ENCODE measurements at regions of chr16 and their contacts with region 1.

Region 1: DNA sequence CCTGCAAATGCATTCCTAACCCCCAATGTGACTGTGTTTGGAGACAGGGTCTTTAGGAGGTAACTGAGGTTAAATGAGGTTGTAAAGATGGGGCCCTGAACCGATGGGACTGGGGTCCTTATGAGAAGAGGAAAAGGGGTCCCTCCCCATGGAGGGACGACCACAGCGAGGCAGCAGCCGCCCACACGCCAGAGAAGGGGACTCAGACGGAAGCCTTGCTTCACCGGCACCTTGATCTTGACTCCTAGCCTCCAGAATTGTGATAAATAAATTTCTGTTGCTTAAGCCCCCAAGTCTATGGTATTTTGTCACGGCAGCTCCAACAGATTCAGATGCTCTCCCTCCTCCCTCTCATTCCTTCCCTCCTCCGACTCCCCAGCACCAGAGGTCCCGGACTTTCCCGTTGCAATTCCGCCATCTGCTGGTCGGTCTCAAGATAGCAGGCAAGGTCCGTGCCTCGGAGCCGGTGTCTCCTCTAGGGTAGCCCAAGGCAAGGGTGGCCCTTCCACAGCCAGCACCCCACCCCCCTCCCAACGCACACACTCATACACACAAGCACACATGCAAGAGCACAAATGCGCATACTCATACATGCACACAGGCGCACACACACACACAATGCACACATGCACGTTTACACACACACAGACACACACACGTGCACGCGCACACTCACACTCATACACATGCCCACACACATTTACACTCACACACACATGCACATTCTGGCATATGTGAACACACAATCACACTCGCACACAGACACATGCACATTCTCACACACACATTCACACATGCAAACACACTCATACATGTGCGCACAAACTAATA is 23.1 kb upstream of the C16orf78 start:
- DNase-seq: peak; percentile 34
- ATAC-seq: peak; percentile 96
- H3K4me3 ChIP-seq: no peak overlapping the region
- H3K27ac ChIP-seq: no peak overlapping the region
- H3K4me1 ChIP-seq: no peaks in the 10 kb centered on the region
- H3K27me3 ChIP-seq: no peaks in the 10 kb centered on the region
- CTCF ChIP-seq: peak; percentile 84
- POLR2A ChIP-seq: no peak
- RAD21 ChIP-seq: peak; percentile 87

Region 2: DNA sequence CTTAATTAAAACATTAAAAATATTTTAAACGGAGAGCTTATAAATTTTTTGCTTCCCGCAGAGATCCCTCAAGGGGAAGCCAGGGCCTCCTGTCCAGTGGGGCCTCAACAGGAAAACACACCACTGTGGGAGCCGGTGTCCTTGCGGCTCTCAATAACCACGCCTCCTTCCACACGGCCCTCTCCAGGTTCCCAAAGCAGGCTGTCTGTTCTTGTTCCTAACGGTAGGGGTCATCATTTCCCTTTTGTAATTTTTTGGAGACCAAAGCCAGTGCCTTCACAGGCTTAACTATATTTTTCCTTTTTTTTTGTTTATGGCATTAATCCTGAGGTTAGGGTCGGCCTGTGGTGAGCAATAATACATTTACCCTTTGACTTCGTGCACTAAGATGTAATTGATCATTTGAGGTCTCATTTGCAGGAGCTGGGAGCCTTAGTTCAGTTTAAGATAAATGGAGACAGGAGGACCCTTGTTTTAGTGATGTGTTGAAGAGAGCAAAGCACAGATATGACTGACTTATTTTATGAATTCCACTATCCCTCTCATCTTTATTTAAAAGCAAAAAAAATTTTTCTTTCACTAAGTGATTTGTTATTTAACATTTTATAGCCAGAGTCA is 663.0 kb before region 1 on chr16:
- CTCF ChIA-PET with region 1: interaction called, 4 read pairs
- POLR2A ChIA-PET with region 1: no interaction called
- dilution Hi-C with region 1: no loop called
- in situ Hi-C with region 1: no loop called
- intact Hi-C with region 1: loop called (anchors 1 kb)
- DNase-seq: peak; percentile 67
- ATAC-seq: peak; percentile 100
- H3K4me3 ChIP-seq: no peak overlapping the region
- H3K27ac ChIP-seq: no peak overlapping the region
- H3K4me1 ChIP-seq: no peaks in the 10 kb centered on the region
- H3K27me3 ChIP-seq: no peaks in the 10 kb centered on the region; the same call in 1 of the 2 replicates
- CTCF ChIP-seq: peak; percentile 84
- POLR2A ChIP-seq: no peak
- RAD21 ChIP-seq: peak; percentile 81

Region 3: DNA sequence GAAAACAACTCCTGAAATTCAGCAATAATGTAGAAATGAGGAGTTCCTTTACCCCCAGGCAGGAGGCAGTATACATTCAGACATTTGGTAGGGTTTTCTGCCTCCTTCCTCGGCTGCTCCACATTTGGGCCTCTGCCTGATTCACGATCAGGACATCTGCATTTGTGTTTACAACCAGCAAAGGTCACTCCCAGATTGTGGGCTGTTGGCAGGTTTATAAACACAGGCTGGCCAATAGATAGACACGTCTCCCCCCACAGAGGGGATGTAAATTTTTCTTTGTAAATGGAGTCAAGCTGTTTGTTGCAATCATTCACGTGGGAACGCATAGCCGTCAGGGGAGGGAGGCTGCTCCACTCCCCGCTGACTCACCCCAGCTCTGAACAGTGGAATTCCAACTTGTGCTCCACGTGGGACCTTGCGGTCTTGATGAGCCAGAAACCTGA is 488.4 kb before region 1 on chr16:
- CTCF ChIA-PET with region 1: interaction called, 11 read pairs
- POLR2A ChIA-PET with region 1: no interaction called
- dilution Hi-C with region 1: no loop called
- in situ Hi-C with region 1: no loop called
- intact Hi-C with region 1: loop called (anchors 1 kb)
- DNase-seq: peak; percentile 80
- ATAC-seq: peak; percentile 94
- H3K4me3 ChIP-seq: no peak overlapping the region
- H3K27ac ChIP-seq: no peak overlapping the region
- H3K4me1 ChIP-seq: no peaks in the 10 kb centered on the region
- H3K27me3 ChIP-seq: no peaks in the 10 kb centered on the region
- CTCF ChIP-seq: peak; percentile 49
- POLR2A ChIP-seq: no peak
- RAD21 ChIP-seq: peak; percentile 54

Region 4: DNA sequence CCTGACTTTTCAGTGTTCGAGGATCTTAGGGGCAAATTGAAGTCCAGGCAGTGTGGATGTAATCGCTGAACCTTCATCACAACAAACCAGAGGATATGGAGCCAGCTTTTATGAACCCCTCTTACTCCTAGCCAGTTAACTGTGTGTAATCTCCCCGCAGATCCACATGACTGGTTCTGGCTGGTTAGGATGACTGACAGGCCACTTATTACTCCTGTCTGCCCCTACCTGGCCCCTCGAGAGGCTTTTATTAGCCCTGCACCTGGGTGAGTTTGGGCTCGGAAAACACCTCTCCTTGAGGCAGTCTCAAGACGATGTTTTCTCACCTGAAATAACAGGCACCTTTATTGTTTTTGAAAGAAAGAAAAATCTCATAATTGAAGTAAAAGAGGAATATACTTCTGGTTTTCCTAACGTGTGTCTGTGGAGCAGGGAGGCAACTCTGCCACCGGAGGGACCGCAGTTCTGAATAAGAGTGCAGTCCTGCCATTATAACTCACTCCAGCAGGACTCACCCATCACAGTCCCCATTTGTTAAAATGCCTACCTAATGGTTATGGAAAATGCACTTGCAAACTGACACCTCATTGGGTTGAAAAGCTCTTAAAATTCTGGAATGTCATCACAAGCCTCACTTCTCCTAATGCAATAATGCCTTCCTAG is 448.6 kb before region 1 on chr16:
- CTCF ChIA-PET with region 1: no interaction called
- POLR2A ChIA-PET with region 1: no interaction called
- dilution Hi-C with region 1: no loop called
- in situ Hi-C with region 1: no loop called
- intact Hi-C with region 1: loop called (anchors 2 kb)
- DNase-seq: no peak
- ATAC-seq: peak; percentile 49
- H3K4me3 ChIP-seq: no peak overlapping the region
- H3K27ac ChIP-seq: no peak overlapping the region
- H3K4me1 ChIP-seq: no peaks in the 10 kb centered on the region
- H3K27me3 ChIP-seq: peaks cover 9% of the 10 kb centered on the region
- CTCF ChIP-seq: peak; percentile 32; the same call in 1 of the 2 replicates
- POLR2A ChIP-seq: no peak
- RAD21 ChIP-seq: peak; percentile 36; the same call in 1 of the 2 replicates

Region 5: DNA sequence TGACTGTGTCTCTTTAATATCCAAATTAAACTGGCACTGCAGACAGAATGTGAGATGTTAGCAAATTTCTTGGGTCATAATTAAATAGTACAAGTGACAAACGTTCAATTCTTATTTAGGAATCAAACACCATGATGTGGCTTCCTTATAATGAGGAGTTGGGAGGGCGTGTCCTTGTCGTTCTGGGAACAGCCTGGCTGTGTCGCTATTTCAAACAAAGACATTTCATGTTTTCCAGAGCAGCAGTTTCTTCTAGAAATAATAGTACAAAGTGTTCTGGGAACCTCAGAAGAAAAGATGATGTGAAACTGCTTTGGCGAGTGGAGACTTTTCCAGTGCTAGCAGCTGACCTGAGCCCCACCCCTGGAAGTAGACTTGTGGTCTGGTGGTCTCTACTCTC is 438.8 kb before region 1 on chr16:
- CTCF ChIA-PET with region 1: no interaction called
- POLR2A ChIA-PET with region 1: no interaction called
- dilution Hi-C with region 1: no loop called
- in situ Hi-C with region 1: no loop called
- intact Hi-C with region 1: loop called (anchors 1 kb)
- DNase-seq: peak; percentile 13
- ATAC-seq: no peak
- H3K4me3 ChIP-seq: no peak overlapping the region
- H3K27ac ChIP-seq: no peak overlapping the region
- H3K4me1 ChIP-seq: no peaks in the 10 kb centered on the region
- H3K27me3 ChIP-seq: peaks cover 6% of the 10 kb centered on the region; the same call in 1 of the 2 replicates
- CTCF ChIP-seq: peak; percentile 44
- POLR2A ChIP-seq: no peak
- RAD21 ChIP-seq: peak; percentile 40